Gastrocnemius medialis (tissue), 4 donors: ENCODE measurements at regions of chr18 and their contacts with region 1.

Region 1: DNA sequence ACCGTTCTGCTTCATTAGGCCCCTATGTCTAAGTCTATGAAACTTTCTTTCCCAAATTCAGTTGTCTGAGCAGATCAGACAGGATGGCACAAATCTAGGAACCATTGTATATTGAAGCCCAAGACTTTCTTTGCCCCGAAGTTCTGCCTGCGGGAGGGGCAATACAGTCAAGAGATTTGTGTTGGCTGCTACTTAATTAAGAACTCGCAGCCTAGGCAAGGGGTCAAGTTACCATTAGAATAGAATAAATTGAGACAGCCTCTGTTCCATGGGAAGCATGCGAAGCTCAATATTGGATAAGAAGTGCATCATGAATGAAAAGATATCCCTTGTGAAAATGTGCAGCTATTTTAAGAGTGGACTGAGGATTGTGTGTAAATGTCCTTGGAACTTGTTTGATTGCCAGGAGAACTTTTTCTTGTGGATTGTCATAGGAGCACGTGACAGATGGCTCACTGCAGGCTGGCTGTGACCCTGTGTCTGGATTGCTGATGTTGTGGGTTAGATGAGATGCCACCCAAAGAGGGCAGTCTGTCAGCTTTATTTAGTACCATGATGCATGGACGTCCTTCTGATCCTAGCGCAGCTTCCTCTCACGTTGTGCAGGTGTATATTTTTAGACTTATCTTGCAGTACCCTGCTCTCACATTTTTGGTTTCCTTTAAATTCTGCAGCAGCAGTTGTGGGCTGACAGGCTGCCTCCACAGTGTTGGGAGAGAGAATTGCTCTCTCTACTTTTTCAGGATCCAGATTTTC is 30.9 kb downstream of the HAUS1 start:
- DNase-seq: peak; percentile 71 to 86
- ATAC-seq: peak; percentile 99 to 100
- H3K4me3 ChIP-seq: no peak overlapping the region
- H3K27ac ChIP-seq: peak overlapping the region; percentile 80 to 85 (median 82)
- H3K4me1 ChIP-seq: peaks cover 9 to 13% of the 10 kb centered on the region in 2 donors
- H3K27me3 ChIP-seq: no peaks in the 10 kb centered on the region
- CTCF ChIP-seq: no peak
- POLR2A ChIP-seq: no peak

Region 2: DNA sequence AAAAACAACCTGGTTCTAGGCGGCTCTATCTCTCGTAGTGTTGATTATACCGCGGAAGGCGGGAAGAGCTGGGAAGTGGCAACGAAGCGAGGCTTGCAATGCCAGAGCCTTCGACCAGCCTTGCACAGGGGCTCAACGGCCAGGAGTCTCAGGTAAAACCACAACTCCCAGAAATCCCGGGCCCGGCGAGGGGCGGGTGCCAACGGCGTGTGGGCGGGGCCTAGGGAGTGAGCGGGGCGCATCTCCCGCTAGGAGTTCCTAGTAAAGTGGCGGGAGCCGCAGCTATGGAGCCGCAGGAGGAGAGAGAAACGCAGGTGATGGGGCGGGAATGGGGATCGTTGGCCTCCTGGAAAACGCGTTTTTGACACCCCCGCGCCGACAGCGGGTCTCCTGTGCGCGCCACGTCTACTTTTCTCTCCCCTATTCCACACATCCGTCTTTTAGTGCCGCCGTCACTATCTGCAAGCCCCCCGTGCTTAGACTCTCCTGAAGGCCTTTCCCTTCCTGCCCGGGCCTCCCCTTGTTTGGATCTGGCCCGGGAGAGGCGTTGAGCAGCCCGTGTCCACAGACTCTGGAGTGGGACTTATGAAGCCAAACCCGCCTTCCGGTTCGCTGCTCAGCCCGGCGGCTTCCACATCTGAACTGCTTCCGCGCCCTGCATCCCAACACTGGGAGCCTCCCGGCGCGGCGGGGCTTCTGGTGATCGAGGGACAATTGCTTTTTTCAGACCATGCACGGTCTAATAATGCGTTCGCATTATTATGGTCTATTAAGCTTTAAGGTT is 30.8 kb before region 1 on chr18 and contains the start of gene HAUS1:
- in situ Hi-C with region 1: no loop called
- intact Hi-C with region 1: loop called (anchors 2 kb)
- DNase-seq: peak; percentile 81 to 91
- ATAC-seq: peak; percentile 95 to 96
- H3K4me3 ChIP-seq: peak within 1 kb of the TSS; percentile 62 to 85 (median 81)
- H3K27ac ChIP-seq: peak within 1 kb of the TSS; percentile 69 to 86 (median 74)
- H3K4me1 ChIP-seq: peaks cover 10 to 12% of the 10 kb centered on the region in 2 donors
- H3K27me3 ChIP-seq: no peaks in the 10 kb centered on the region
- CTCF ChIP-seq: no peak
- POLR2A ChIP-seq: peak; percentile 31 to 54
- total RNA-seq, gene HAUS1: 8.1 to 20.6 (median 13.3) TPM